Right ventricle myocardium inferior (tissue), 1 donor: ENCODE measurements at regions of chr10 and their contacts with region 1.

Region 1: GRCh38 chr10:71812016-71812912 is 38.8 kb downstream of the PSAP start:
- DNase-seq: peak; percentile 87
- ATAC-seq: peak; percentile 80

Region 2: GRCh38 chr10:71314028-71314693 is 498.1 kb before region 1 on chr10:
- intact Hi-C with region 1: loop called (anchors 2 kb)
- DNase-seq: no peak
- ATAC-seq: peak; percentile 68

Region 3: GRCh38 chr10:71383972-71384687 is 428.1 kb before region 1 on chr10:
- intact Hi-C with region 1: loop called (anchors 5 kb)
- DNase-seq: peak; percentile 86
- ATAC-seq: peak; percentile 87

Region 4: DNA sequence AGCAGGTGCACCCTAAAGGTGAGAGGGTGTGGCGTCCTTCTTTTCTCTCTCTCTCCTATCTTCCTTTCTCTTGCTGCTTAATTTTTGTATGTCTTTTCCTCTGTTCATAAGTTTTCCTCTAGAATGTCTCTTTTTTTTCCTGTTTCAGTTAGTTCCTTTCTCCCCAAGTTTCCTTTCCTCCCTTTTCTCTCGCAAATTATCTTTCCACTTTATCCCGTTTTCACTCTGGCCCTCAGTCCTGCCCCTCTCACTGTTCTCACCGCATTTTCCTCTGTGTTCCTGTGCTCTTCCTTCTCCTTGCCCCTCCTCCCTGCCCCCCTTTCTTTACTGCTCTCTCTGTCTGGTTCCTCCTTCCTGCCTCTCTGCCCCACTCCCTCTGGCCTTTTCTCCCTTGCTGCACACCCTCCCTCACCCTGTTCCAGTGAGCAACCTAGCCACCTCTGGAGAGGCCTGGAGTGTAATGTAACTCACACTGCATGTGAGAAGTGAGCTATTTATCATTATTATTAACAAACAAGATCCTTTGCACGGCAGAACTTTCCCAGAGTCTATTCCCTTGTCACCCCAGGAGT is 251.2 kb before region 1 on chr10:
- intact Hi-C with region 1: no loop called
- DNase-seq: peak; percentile 8
- ATAC-seq: no peak